Body of pancreas (tissue), 4 donors: ENCODE measurements at regions of chr1 and their contacts with region 1.

Region 1: DNA sequence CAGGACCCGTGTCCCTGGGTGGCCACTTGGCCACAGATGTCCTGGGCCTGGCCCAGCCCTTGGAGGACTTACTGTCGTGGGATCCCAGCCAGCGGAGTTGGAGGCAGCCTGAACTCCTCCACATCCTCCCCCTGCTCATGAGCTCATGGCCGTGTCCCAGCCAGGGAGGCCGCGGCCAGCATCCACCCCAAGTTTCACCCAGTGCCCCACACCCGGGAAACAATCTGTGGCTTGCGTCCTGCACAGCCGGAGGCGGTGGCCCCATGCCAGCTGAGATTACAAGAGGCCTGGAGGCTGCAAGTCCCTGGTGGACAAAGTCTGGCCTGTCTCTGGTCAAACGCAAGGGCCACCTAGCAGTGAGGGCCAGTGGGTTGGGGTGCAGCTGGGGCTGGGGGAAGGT is 27.5 kb upstream of the TMEM52 start:
- DNase-seq: peak; percentile 29 to 54 (median 40)
- ATAC-seq: no peak
- H3K4me3 ChIP-seq: no peak overlapping the region
- H3K27ac ChIP-seq: no peak overlapping the region
- H3K4me1 ChIP-seq: peaks cover 7% of the 10 kb centered on the region
- H3K27me3 ChIP-seq: no peaks in the 10 kb centered on the region
- CTCF ChIP-seq: no peak
- POLR2A ChIP-seq: no peak

Region 2: GRCh38 chr1:2044510-2045319 is 98.2 kb after region 1 on chr1:
- intact Hi-C with region 1: loop called (anchors 5 kb)
- DNase-seq: peak; percentile 62 to 80 (median 72)
- ATAC-seq: peak; percentile 72
- H3K4me3 ChIP-seq: no peak overlapping the region
- H3K27ac ChIP-seq: no peak overlapping the region
- H3K4me1 ChIP-seq: peaks cover 22% of the 10 kb centered on the region
- H3K27me3 ChIP-seq: no peaks in the 10 kb centered on the region
- CTCF ChIP-seq: peak; percentile 65 to 93 (median 87)
- POLR2A ChIP-seq: no peak

Region 3: GRCh38 chr1:2163205-2163604 is 216.7 kb after region 1 on chr1:
- intact Hi-C with region 1: no loop called
- DNase-seq: no peak
- ATAC-seq: no peak
- H3K4me3 ChIP-seq: no peak overlapping the region
- H3K27ac ChIP-seq: no peak overlapping the region
- H3K4me1 ChIP-seq: no peaks in the 10 kb centered on the region
- H3K27me3 ChIP-seq: no peaks in the 10 kb centered on the region
- CTCF ChIP-seq: no peak
- POLR2A ChIP-seq: no peak